Naive thymus-derived CD4-positive, alpha-beta T cell (primary cell): ENCODE measurements at regions of chr14 and their contacts with region 1.

Region 1: GRCh38 chr14:66624299-66624937 is 116.5 kb downstream of the GPHN start:
- DNase-seq: peak in 6 of 9 donors; percentile 0 to 24 (median 6)
- ATAC-seq: no peak
- H3K4me3 ChIP-seq: no peak overlapping the region
- H3K4me3 Mint-ChIP-seq: no peak overlapping the region
- H3K27ac ChIP-seq: no peak overlapping the region
- H3K27ac Mint-ChIP-seq: no peak overlapping the region
- H3K4me1 ChIP-seq: no peaks in the 10 kb centered on the region
- H3K4me1 Mint-ChIP-seq: peaks cover 0 to 18% (median 9%) of the 10 kb centered on the region in 7 donors
- H3K27me3 ChIP-seq: no peaks in the 10 kb centered on the region
- H3K27me3 Mint-ChIP-seq: peaks cover 0 to 4% (median 0%) of the 10 kb centered on the region in 5 donors

Region 2: DNA sequence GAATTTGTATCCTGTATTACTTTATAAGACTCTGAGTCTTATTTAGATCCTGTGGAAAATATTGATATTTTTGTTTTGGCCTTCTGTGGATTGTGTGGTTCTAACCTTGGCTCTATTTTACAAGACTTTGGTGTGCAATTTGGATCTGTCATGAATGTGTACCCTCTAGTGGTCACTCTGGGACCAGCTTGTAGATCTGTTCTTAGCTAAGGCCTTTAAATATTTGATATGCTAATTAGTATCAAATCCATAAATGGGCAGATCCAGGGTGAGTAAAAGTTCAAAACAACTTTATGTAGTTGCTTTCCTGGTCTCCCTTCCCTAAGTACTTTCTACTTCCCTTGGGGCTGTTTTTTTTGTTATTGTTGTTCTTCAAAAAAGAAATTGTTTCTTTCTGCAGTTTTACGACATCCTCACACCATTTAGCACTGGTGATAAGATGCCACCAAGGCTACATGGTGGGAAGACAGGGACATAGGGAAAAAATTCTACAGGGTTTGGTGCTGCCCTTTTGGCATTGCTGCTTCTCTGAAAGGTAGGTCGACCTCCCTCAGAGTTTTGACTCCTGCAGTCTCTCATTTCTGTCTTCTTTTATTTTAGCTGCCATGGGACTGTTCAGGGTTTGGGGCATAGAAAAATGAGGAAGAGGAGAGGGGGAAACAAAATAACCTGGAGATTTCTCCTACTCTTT is 122.0 kb after region 1 on chr14:
- CTCF ChIA-PET with region 1: no interaction called
- POLR2A ChIA-PET with region 1: no interaction called
- intact Hi-C with region 1: loop called in 1 of 2 experiments (anchors 2 kb)
- DNase-seq: peak in 3 of 9 donors; percentile 2 to 5 (median 2)
- ATAC-seq: no peak
- H3K4me3 ChIP-seq: no peak overlapping the region
- H3K4me3 Mint-ChIP-seq: no peak overlapping the region
- H3K27ac ChIP-seq: no peak overlapping the region
- H3K27ac Mint-ChIP-seq: no peak overlapping the region
- H3K4me1 ChIP-seq: no peaks in the 10 kb centered on the region
- H3K4me1 Mint-ChIP-seq: peaks cover 0 to 1% (median 0%) of the 10 kb centered on the region in 7 donors
- H3K27me3 ChIP-seq: no peaks in the 10 kb centered on the region
- H3K27me3 Mint-ChIP-seq: no peaks in the 10 kb centered on the region

Region 3: DNA sequence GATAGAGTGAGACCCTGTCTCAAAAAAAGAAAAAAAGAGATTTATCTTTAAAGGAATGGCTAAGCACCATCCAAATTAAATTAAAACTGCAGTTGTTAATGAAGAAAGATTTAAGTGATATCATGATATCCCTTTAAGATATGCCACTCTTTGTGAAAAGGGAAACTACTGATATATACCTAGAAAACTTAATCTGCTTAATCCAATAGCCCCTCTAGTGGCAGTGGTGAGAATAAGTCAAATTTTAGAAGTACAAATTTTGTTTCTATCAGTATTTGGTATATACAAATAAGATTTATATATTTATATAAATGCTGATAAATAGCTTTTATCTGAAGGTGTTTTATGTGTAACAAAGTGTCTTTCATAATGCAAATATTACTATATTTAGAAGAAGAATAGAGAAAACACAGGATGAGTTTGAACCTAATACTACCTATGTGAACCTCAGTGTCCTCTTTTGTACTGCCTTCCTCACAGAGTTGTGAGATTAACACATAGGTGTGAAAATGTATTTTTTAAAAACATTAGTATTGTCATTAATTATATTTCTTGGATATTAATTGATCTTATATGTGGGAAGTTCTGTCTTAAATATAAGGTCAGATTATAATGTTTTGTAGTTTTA is 513.4 kb after region 1 on chr14:
- CTCF ChIA-PET with region 1: no interaction called
- POLR2A ChIA-PET with region 1: no interaction called
- intact Hi-C with region 1: loop called in 1 of 2 experiments (anchors 5 kb)
- DNase-seq: peak in 1 of 9 donors; percentile 4
- ATAC-seq: no peak
- H3K4me3 ChIP-seq: no peak overlapping the region
- H3K4me3 Mint-ChIP-seq: no peak overlapping the region
- H3K27ac ChIP-seq: no peak overlapping the region
- H3K27ac Mint-ChIP-seq: no peak overlapping the region
- H3K4me1 ChIP-seq: no peaks in the 10 kb centered on the region
- H3K4me1 Mint-ChIP-seq: peaks cover 0 to 9% (median 0%) of the 10 kb centered on the region in 7 donors
- H3K27me3 ChIP-seq: no peaks in the 10 kb centered on the region
- H3K27me3 Mint-ChIP-seq: no peaks in the 10 kb centered on the region

Region 4: DNA sequence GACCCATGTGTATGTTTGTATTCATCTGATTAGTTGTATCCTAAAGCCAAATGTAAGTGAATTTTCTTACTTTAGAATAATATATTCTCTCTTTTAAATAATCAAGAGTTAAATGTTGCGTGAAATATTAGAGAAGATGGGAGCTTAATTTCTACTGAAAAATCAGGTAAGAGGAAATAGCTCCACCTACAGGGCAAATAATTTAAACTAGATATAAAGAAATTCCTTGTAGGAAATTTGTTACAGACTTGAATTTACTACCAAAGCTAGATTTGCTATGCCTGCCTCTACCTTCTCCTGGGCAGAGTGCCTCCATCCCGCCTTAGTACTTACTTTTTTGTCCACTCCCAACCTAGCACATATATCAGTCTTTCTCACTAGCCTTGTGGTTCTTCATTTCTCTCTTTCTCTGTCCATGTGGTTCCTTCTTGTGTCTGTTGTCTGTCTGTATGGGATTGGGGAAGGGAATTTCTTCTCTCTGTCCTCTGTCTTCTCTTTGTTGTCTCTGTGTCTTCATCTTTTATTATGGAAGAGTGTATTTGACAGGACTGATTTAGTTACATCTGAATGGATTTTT is 661.5 kb after region 1 on chr14:
- CTCF ChIA-PET with region 1: interaction called, 3 read pairs
- POLR2A ChIA-PET with region 1: no interaction called
- intact Hi-C with region 1: loop called in 1 of 2 experiments (anchors 5 kb)
- DNase-seq: peak in 6 of 9 donors; percentile 3 to 37 (median 30)
- ATAC-seq: no peak
- H3K4me3 ChIP-seq: no peak overlapping the region
- H3K4me3 Mint-ChIP-seq: no peak overlapping the region
- H3K27ac ChIP-seq: no peak overlapping the region
- H3K27ac Mint-ChIP-seq: peak overlapping the region in 1 of 9 donors; percentile 83
- H3K4me1 ChIP-seq: no peaks in the 10 kb centered on the region
- H3K4me1 Mint-ChIP-seq: peaks cover 0 to 5% (median 0%) of the 10 kb centered on the region in 7 donors
- H3K27me3 ChIP-seq: no peaks in the 10 kb centered on the region
- H3K27me3 Mint-ChIP-seq: no peaks in the 10 kb centered on the region

Region 5: GRCh38 chr14:67583711-67584644 is 959.6 kb after region 1 on chr14:
- CTCF ChIA-PET with region 1: no interaction called
- POLR2A ChIA-PET with region 1: no interaction called
- intact Hi-C with region 1: no loop called
- DNase-seq: peak in 5 of 9 donors; percentile 26 to 44 (median 35)
- ATAC-seq: peak; percentile 79
- H3K4me3 ChIP-seq: no peak overlapping the region
- H3K4me3 Mint-ChIP-seq: no peak overlapping the region
- H3K27ac ChIP-seq: no peak overlapping the region
- H3K27ac Mint-ChIP-seq: no peak overlapping the region
- H3K4me1 ChIP-seq: no peaks in the 10 kb centered on the region
- H3K4me1 Mint-ChIP-seq: peaks cover 0 to 11% (median 0%) of the 10 kb centered on the region in 7 donors
- H3K27me3 ChIP-seq: no peaks in the 10 kb centered on the region
- H3K27me3 Mint-ChIP-seq: no peaks in the 10 kb centered on the region